Posterior vena cava (tissue), 2 donors: ENCODE measurements at regions of chr7 and their contacts with region 1.

Region 1: GRCh38 chr7:28354601-28355402 is 57.5 kb upstream of the CREB5 start:
- DNase-seq: no peak

Region 2: GRCh38 chr7:28389504-28390395 is 34.9 kb after region 1 on chr7:
- intact Hi-C with region 1: loop called in 1 of 2 experiments (anchors 1 kb)
- DNase-seq: no peak